ENCODE measurements at regions of chr1 and their contacts with region 1.

Region 1: GRCh38 chr1:33610864-33611455 is 138.5 kb downstream of the ZSCAN20 start:
- DNase-seq: no peak
- H3K4me3 ChIP-seq: no peak overlapping the region
- H3K27ac ChIP-seq: no peak overlapping the region
- H3K4me1 ChIP-seq: no peaks in the 10 kb centered on the region
- H3K27me3 ChIP-seq: no peaks in the 10 kb centered on the region
- CTCF ChIP-seq: no peak
- POLR2A ChIP-seq: no peak

Region 2: DNA sequence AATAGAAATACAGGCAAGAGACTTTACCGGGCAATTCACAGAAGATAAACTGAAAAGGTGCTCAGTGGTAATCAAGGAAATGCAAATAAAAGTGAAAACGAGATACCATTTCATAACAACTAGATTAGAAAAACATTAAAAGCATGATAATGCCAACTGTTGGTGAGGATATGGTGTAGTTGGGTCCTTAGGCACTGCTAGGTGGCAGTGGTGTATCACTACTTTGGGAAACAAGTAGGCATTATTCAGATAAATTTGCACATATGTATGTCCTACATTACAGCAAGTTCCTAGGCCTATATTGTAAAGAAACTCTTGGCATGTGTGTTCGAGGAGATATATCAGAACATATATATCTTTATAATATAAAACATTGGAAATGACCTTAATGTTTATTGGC is 499.0 kb before region 1 on chr1:
- CTCF ChIA-PET with region 1: interaction called, 3 read pairs
- POLR2A ChIA-PET with region 1: no interaction called
- dilution Hi-C with region 1: no loop called
- intact Hi-C with region 1: loop called (anchors 5 kb)
- DNase-seq: peak; percentile 49
- H3K4me3 ChIP-seq: no peak overlapping the region
- H3K27ac ChIP-seq: no peak overlapping the region
- H3K4me1 ChIP-seq: no peaks in the 10 kb centered on the region
- H3K27me3 ChIP-seq: peaks cover 2 to 12% of the 10 kb centered on the region in 2 experiments
- CTCF ChIP-seq: peak in 1 of 2 donors; percentile 36
- POLR2A ChIP-seq: no peak

Region 3: GRCh38 chr1:33137800-33138199 is 473.2 kb before region 1 on chr1:
- CTCF ChIA-PET with region 1: interaction called, 18 read pairs
- POLR2A ChIA-PET with region 1: no interaction called
- dilution Hi-C with region 1: no loop called
- intact Hi-C with region 1: no loop called
- DNase-seq: peak; percentile 50
- H3K4me3 ChIP-seq: no peak overlapping the region
- H3K27ac ChIP-seq: no peak overlapping the region
- H3K4me1 ChIP-seq: no peaks in the 10 kb centered on the region
- H3K27me3 ChIP-seq: peaks cover 2 to 3% of the 10 kb centered on the region in 2 experiments
- CTCF ChIP-seq: peak; percentile 51 to 80
- POLR2A ChIP-seq: no peak

Region 4: GRCh38 chr1:33211972-33212371 is 399.0 kb before region 1 on chr1:
- CTCF ChIA-PET with region 1: no interaction called
- POLR2A ChIA-PET with region 1: no interaction called
- dilution Hi-C with region 1: no loop called
- intact Hi-C with region 1: no loop called
- DNase-seq: no peak
- H3K4me3 ChIP-seq: no peak overlapping the region
- H3K27ac ChIP-seq: no peak overlapping the region
- H3K4me1 ChIP-seq: no peaks in the 10 kb centered on the region
- H3K27me3 ChIP-seq: peaks cover 3 to 4% of the 10 kb centered on the region in 2 experiments
- CTCF ChIP-seq: no peak
- POLR2A ChIP-seq: no peak

Region 5: DNA sequence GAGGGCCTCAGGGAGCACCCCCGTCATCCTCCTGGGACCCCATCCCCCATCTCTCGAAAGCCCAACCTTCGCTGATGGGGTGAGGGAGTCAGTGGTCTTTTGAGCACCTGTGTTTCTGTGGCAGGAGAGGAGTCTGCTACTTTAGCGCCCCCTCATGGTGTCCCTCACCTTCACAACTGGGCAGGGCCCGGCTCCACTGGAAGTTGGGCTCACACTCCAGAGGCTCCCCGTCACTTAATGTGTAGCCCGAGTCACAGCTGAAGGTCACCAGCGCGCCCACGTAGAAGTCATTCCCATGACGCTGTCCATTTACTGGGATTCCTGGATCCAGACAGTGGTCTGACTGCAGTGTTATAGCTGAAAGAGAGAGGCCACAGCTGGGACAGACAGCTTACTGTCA is 113.4 kb after region 1 on chr1:
- CTCF ChIA-PET with region 1: no interaction called
- POLR2A ChIA-PET with region 1: no interaction called
- dilution Hi-C with region 1: no loop called
- intact Hi-C with region 1: no loop called
- DNase-seq: no peak
- H3K4me3 ChIP-seq: no peak overlapping the region
- H3K27ac ChIP-seq: no peak overlapping the region
- H3K4me1 ChIP-seq: no peaks in the 10 kb centered on the region
- H3K27me3 ChIP-seq: no peaks in the 10 kb centered on the region
- CTCF ChIP-seq: no peak
- POLR2A ChIP-seq: no peak

Region 6: GRCh38 chr1:34742667-34743270 is 1131.8 kb after region 1 on chr1:
- CTCF ChIA-PET with region 1: interaction called, 15 read pairs
- POLR2A ChIA-PET with region 1: no interaction called
- dilution Hi-C with region 1: no loop called
- intact Hi-C with region 1: no loop called
- DNase-seq: peak; percentile 61
- H3K4me3 ChIP-seq: no peak overlapping the region
- H3K27ac ChIP-seq: no peak overlapping the region
- H3K4me1 ChIP-seq: no peaks in the 10 kb centered on the region
- H3K27me3 ChIP-seq: peaks cover 2 to 3% of the 10 kb centered on the region in 2 experiments
- CTCF ChIP-seq: peak; percentile 93 to 99
- POLR2A ChIP-seq: no peak